Natural killer cell (primary cell): ENCODE measurements at regions of chr18 and their contacts with region 1.

Region 1: GRCh38 chr18:78601349-78601748 is 378.3 kb upstream of the SALL3 start:
- DNase-seq: peak; percentile 21 to 22
- ATAC-seq: peak in 1 of 3 donors; percentile 31
- H3K4me3 ChIP-seq: no peak overlapping the region
- H3K4me3 Mint-ChIP-seq: no peak overlapping the region
- H3K27ac ChIP-seq: no peak overlapping the region
- H3K27ac Mint-ChIP-seq: no peak overlapping the region
- H3K4me1 ChIP-seq: no peaks in the 10 kb centered on the region
- H3K4me1 Mint-ChIP-seq: peaks cover 0 to 6% of the 10 kb centered on the region in 2 donors
- H3K27me3 ChIP-seq: no peaks in the 10 kb centered on the region
- H3K27me3 Mint-ChIP-seq: peaks cover 0 to 26% of the 10 kb centered on the region in 2 donors
- CTCF ChIP-seq: no peak

Region 2: GRCh38 chr18:78619854-78620253 is 18.5 kb after region 1 on chr18:
- intact Hi-C with region 1: no loop called
- DNase-seq: no peak
- ATAC-seq: no peak
- H3K4me3 ChIP-seq: no peak overlapping the region
- H3K4me3 Mint-ChIP-seq: no peak overlapping the region
- H3K27ac ChIP-seq: no peak overlapping the region
- H3K27ac Mint-ChIP-seq: no peak overlapping the region
- H3K4me1 ChIP-seq: no peaks in the 10 kb centered on the region
- H3K4me1 Mint-ChIP-seq: peaks cover 0 to 19% of the 10 kb centered on the region in 2 donors
- H3K27me3 ChIP-seq: no peaks in the 10 kb centered on the region
- H3K27me3 Mint-ChIP-seq: peaks cover 12 to 19% of the 10 kb centered on the region in 2 donors
- CTCF ChIP-seq: no peak

Region 3: DNA sequence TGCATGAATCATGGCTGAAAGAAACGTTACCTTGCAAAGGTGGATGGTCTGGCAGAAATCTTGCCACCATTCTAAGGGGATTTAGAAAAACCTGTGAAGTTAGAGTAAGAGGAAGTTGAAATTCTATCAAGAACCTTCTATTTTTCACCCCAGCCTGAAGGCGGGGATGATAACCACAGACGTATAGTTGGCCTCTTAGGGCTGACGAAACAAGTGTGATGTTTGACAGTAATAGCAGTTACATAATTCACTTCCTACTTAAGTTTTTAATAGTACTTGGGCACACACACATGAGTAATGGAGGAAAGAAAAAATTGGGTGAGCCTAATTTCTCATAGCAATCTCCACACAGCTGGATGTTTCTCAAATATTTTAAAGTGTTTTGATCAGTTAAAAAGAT is 41.7 kb after region 1 on chr18:
- intact Hi-C with region 1: loop called (anchors 1 kb)
- DNase-seq: peak in 1 of 2 donors; percentile 63
- ATAC-seq: peak; percentile 72 to 88 (median 87)
- H3K4me3 ChIP-seq: no peak overlapping the region
- H3K4me3 Mint-ChIP-seq: peak overlapping the region; percentile 49
- H3K27ac ChIP-seq: peak overlapping the region; percentile 54
- H3K27ac Mint-ChIP-seq: peak overlapping the region; percentile 79 to 90
- H3K4me1 ChIP-seq: peaks cover 13% of the 10 kb centered on the region
- H3K4me1 Mint-ChIP-seq: peaks cover 18 to 63% of the 10 kb centered on the region in 2 donors
- H3K27me3 ChIP-seq: no peaks in the 10 kb centered on the region
- H3K27me3 Mint-ChIP-seq: peaks cover 0 to 6% of the 10 kb centered on the region in 2 donors
- CTCF ChIP-seq: no peak